ENCODE measurements at regions of chr17 and their contacts with region 1.

Region 1: DNA sequence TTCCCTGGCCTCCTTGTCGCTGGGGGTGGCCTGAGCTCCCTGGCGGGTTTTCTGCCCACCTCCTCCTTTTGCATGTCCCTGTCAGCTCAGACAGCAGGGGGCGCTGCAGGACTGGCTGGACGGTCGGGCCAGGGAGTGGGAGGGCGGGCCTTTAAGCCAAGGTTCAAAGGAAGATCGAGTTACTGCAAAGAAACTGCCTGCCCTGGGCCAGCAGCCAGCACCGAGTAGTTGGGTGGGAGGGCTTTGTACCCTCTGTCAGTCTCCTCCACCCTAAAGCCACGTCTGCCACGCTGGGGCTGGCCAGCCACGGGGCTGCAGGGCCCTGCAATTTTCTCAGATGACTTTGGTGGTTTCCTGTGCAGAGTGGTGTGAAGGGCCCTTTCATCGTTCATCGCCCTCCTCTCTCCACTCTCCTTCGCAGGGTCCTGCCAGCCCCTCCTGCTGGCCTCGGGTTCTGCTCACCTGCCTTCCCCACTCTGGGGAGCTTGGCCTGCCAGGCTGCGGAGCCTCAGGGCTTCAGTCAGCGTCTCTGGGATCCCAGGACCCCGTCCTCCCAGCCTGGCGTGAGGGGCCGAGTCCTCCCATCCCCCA is 12.3 kb downstream of the GPR142 start:
- DNase-seq: peak; percentile 93 to 98 (median 98)
- ATAC-seq: peak; percentile 85
- H3K4me3 ChIP-seq: no peak overlapping the region
- H3K4me1 ChIP-seq: peaks cover 25% of the 10 kb centered on the region
- CTCF ChIP-seq: peak; percentile 86

Region 2: DNA sequence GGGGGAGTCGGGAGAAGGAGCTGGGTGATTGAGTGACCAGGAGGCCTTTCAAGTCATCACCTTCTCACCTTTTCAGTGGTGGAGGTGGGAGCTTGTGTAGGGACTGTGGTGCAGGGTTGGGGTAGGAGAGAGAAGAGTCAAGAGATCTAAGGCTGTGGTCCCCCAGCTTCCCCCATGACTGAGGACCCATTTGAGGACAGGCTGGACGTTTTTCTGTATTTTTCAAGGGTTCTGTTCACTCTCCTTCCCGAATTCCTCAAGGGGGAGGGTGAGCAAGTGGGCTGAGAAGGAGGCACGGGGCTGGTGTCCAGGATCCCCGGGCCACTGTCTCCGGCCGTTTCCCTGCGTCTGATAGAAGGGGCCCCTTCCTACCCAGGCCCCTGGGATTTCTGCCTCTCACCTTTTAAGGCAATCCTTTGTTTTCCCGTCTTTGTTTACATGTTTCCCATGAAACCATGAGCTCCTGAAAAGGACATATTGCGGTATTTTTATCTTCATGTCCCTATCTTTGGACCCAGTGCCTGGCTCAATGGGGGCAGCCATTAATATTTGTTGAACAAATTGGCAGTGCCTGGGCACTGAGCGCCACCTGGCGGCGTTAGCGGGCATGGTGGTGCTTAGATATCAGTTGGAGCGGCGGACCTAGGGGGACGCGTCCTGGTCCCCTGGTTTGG is 77.7 kb after region 1 on chr17:
- intact Hi-C with region 1: loop called (anchors 2 to 5 kb)
- DNase-seq: peak; percentile 79 to 89 (median 85)
- ATAC-seq: peak; percentile 15
- H3K4me3 ChIP-seq: no peak overlapping the region
- H3K4me1 ChIP-seq: peaks cover 19% of the 10 kb centered on the region
- CTCF ChIP-seq: peak; percentile 89